ENCODE measurements at regions of chr16 and their contacts with region 1.

Region 1: GRCh38 chr16:49701789-49702494 is 154.0 kb downstream of the ZNF423 start:
- DNase-seq: no peak
- H3K4me3 ChIP-seq: no peak overlapping the region
- H3K27ac ChIP-seq: no peak overlapping the region
- H3K4me1 ChIP-seq: no peaks in the 10 kb centered on the region
- H3K27me3 ChIP-seq: peaks cover 11 to 15% of the 10 kb centered on the region in 2 experiments
- CTCF ChIP-seq: no peak
- POLR2A ChIP-seq: no peak

Region 2: DNA sequence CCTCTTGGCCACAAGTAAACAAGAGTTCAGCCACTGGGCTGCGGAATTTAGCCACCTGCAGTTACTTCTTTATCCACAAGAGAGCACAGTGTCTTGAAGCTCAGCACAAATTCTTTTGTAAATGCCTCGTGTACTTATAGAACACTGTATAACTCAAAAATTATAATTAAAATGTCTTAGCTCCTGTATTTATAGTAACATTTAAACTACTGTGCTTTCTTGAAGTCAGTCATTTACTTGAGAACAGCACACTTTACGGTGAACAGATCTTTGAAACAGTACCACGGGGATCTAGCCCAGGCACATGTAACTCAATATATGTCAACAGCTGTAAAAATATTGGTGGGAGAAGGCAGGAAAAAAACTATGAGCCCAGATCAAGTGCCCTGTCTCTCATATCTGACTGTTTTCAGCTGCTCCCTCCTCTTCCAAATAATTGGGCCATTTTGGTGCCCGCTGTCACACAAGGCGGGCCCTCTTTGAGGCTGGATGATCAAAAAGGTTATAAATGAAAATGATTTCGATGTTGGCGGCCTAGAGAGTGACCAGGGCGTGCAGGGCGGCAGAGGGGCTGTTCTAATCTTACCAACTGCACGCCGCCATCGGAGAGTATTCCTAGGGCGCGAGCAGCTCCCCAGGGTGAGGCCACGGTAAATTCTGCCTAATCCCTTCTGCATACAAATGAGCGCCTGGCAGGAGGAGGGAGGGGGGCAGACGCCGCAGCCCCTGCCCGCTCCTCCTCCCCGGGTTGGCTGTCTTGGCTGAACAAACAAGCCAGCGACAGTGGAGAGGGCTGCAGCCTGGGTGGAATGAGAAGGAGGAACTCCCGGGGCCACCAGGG is 145.1 kb before region 1 on chr16:
- CTCF ChIA-PET with region 1: interaction called, 10 read pairs
- POLR2A ChIA-PET with region 1: no interaction called
- dilution Hi-C with region 1: no loop called
- intact Hi-C with region 1: loop called (anchors 10 kb)
- DNase-seq: peak; percentile 47
- H3K4me3 ChIP-seq: no peak overlapping the region
- H3K27ac ChIP-seq: no peak overlapping the region
- H3K4me1 ChIP-seq: no peaks in the 10 kb centered on the region
- H3K27me3 ChIP-seq: no peaks in the 10 kb centered on the region
- CTCF ChIP-seq: peak; percentile 24 to 47
- POLR2A ChIP-seq: no peak

Region 3: GRCh38 chr16:49918257-49918656 is 216.3 kb after region 1 on chr16:
- CTCF ChIA-PET with region 1: no interaction called
- POLR2A ChIA-PET with region 1: no interaction called
- dilution Hi-C with region 1: no loop called
- intact Hi-C with region 1: no loop called
- DNase-seq: no peak
- H3K4me3 ChIP-seq: no peak overlapping the region
- H3K27ac ChIP-seq: no peak overlapping the region
- H3K4me1 ChIP-seq: no peaks in the 10 kb centered on the region
- H3K27me3 ChIP-seq: no peaks in the 10 kb centered on the region
- CTCF ChIP-seq: no peak
- POLR2A ChIP-seq: no peak

Measured in endothelial cell of umbilical vein (primary cell).